Naive thymus-derived CD4-positive, alpha-beta T cell (primary cell): ENCODE measurements at regions of chr4 and their contacts with region 1.

Region 1: DNA sequence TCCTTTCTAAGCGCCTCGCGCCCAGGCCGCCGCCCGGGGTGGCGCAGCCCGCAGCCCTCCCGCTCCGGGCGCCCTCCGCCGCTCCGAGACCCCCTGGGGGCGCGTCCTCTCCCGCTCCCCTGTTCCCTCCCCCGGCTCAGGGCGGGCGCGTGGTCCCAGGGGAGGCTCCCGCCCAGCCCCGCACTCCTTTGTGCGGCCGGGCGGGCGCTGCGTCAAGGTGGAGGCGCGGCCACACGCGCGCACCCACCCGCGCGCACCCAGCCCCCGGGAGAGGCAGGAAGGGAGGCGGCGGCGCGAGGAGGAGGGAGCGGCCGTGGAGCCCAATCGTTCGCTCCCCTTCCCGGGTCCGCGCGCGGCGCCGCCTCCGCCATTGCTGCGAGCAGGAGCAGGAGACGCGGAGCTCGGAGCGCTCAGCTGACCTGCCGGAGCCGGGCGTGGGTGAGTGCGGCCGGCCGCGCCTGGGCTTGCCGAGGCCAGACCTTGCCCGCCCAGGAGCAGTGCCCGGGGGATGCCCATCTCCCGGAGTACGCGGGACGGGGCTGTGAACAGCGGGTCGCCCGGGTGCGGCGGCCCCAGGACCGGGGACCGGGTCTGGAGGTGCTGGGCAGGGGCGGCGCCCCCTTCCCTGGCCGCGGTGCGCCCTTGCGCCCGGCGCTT is at the start of gene NSG1:
- DNase-seq: peak in 6 of 9 donors; percentile 21 to 45 (median 35)
- ATAC-seq: peak; percentile 60
- H3K4me3 ChIP-seq: peak within 1 kb of the TSS; percentile 43
- H3K4me3 Mint-ChIP-seq: peak within 1 kb of the TSS; percentile 75 to 89 (median 86)
- H3K27ac ChIP-seq: no peak within 1 kb of the TSS
- H3K27ac Mint-ChIP-seq: peak within 1 kb of the TSS in 4 of 9 donors; percentile 11 to 21 (median 18)
- H3K4me1 ChIP-seq: peaks cover 0 to 3% of the 10 kb centered on the region in 2 donors
- H3K4me1 Mint-ChIP-seq: peaks cover 4 to 23% (median 16%) of the 10 kb centered on the region in 7 donors
- H3K27me3 ChIP-seq: no peaks in the 10 kb centered on the region
- H3K27me3 Mint-ChIP-seq: peaks cover 30 to 60% (median 46%) of the 10 kb centered on the region in 5 donors
- total RNA-seq, gene NSG1: 0.90 to 24.5 (median 19.5) TPM

Region 2: DNA sequence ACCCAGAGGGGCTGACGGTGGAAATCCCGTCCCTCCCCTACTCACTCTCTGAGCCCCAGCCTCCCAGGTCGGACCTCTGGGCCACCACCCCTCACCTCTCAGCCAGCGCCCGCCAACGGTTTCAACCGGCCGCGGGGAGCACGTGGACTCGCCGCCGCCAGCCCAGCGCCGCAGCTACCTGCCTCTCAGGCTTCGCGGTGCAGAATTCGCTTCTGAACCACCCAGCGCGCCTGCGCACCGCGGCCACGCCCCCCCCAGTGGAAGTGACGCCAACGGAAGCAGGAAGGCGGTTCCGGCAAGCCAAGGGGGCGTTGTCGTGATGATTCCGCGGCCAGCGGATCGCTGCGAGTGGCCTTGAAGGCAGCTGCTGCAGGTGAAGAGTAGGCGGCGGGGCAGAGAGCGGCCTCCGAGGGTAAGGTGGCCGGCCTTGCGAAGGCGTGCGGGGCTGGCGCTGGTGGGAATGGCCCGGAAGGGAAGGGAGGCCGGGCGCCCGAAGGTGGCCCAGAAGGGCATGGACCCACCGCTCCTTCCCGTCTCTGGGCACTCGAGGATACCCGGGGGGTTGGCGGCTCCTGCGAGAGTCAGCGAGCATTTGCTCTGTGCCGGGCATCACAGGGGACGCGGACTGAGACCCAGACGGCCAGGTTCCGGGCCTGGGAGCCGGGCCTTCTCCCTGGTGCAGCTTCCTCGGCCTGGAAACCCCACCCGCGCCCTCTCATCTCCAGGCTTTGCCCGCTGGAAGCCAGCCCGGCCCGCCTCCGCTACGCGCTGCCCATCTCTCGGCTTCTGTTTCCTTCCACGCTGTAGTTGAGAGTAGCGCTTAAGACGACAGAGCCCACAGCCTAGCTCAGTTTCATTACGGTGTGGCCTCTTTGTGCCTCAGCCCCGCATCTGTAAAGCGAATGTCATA is 96.7 kb before region 1 on chr4 and contains the starts of genes LYAR and ZBTB49:
- CTCF ChIA-PET with region 1: no interaction called
- POLR2A ChIA-PET with region 1: no interaction called
- intact Hi-C with region 1: loop called in 1 of 2 experiments (anchors 1 kb)
- DNase-seq: peak; percentile 89 to 99 (median 96)
- ATAC-seq: peak; percentile 96
- H3K4me3 ChIP-seq: peak within 1 kb of the TSS; percentile 81
- H3K4me3 Mint-ChIP-seq: peak within 1 kb of the TSS; percentile 93 to 98 (median 96)
- H3K27ac ChIP-seq: peak within 1 kb of the TSS; percentile 79
- H3K27ac Mint-ChIP-seq: peak within 1 kb of the TSS; percentile 80 to 95 (median 92)
- H3K4me1 ChIP-seq: peaks cover 20 to 21% of the 10 kb centered on the region in 2 donors
- H3K4me1 Mint-ChIP-seq: peaks cover 40 to 77% (median 57%) of the 10 kb centered on the region in 7 donors
- H3K27me3 ChIP-seq: no peaks in the 10 kb centered on the region
- H3K27me3 Mint-ChIP-seq: no peaks in the 10 kb centered on the region
- total RNA-seq, gene LYAR: 11.1 to 27.4 (median 21.0) TPM
- total RNA-seq, gene ZBTB49: 6.3 to 16.1 (median 8.0) TPM

Region 3: GRCh38 chr4:4308800-4309441 is 77.9 kb before region 1 on chr4:
- CTCF ChIA-PET with region 1: no interaction called
- POLR2A ChIA-PET with region 1: no interaction called
- intact Hi-C with region 1: no loop called
- DNase-seq: no peak
- ATAC-seq: no peak
- H3K4me3 ChIP-seq: no peak overlapping the region
- H3K4me3 Mint-ChIP-seq: no peak overlapping the region
- H3K27ac ChIP-seq: no peak overlapping the region
- H3K27ac Mint-ChIP-seq: no peak overlapping the region
- H3K4me1 ChIP-seq: no peaks in the 10 kb centered on the region
- H3K4me1 Mint-ChIP-seq: peaks cover 0 to 7% (median 4%) of the 10 kb centered on the region in 7 donors
- H3K27me3 ChIP-seq: no peaks in the 10 kb centered on the region
- H3K27me3 Mint-ChIP-seq: no peaks in the 10 kb centered on the region

Region 4: DNA sequence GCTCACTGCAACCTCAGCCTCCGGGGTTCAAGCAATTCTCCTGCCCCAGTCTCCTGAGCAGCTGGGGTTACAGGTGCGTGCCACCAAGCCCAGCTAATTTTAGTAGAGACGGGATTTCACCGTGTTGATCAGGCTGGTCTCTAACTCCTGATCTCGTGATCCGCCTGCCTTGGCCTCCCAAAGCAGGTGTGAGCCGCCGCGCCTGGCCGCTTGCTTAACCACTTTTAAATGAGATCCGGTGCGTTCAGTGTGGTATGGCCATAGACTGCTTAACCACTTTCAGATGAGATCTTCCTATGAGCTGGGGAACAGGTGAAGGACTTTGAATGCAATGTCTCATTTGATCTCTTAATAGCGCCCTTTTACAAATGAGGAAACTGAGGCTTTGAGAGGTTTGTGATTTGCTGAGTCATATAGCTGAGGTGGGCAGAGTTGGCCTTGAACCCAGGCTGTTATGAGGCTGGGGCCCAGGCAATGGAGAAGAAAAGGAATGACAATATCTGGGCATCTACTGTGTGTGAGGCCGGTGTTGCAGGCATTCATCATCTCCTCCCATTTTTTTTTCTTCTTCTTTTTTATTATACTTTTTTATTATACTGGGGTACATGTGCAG is 41.8 kb before region 1 on chr4:
- CTCF ChIA-PET with region 1: no interaction called
- POLR2A ChIA-PET with region 1: interaction called, 4 read pairs
- intact Hi-C with region 1: loop called in 1 of 2 experiments (anchors 1 kb)
- DNase-seq: no peak
- ATAC-seq: no peak
- H3K4me3 ChIP-seq: no peak overlapping the region
- H3K4me3 Mint-ChIP-seq: no peak overlapping the region
- H3K27ac ChIP-seq: no peak overlapping the region
- H3K27ac Mint-ChIP-seq: peak overlapping the region in 6 of 9 donors; percentile 8 to 70 (median 14)
- H3K4me1 ChIP-seq: peaks cover 5 to 13% of the 10 kb centered on the region in 2 donors
- H3K4me1 Mint-ChIP-seq: peaks cover 11 to 56% (median 29%) of the 10 kb centered on the region in 7 donors
- H3K27me3 ChIP-seq: no peaks in the 10 kb centered on the region
- H3K27me3 Mint-ChIP-seq: no peaks in the 10 kb centered on the region

Region 5: DNA sequence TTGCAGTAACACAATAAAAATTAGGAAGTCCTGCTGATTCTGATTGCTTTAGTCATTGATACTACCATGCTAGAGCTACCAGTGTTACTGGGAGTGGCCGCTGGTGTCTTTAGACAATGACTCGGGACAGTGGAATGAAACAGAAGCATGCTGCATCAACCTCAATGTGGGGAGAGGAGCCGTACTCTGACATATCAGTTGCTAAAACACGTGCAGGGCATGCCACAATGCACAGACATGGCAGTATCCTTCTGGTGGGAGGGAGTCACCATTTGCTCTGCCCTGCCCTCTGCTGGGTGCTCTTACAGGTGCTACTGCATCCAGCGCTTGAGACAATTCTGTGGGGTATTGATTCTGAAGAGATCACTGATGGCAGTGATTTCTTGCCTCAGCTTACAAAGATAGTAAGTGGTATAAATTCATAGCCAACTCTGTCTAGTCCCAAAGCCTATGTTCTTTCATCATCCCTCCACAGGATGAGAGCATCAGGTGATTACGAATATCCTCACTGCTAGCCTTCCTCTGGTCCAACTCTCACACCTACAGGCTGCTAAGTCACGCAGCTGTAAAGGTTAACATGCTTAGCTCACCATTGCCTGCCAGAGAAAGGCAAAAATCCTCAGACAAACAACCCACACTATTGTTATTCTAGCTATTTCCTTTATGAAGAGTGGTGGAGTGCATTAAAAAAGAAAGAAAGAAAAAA is 43.8 kb after region 1 on chr4:
- CTCF ChIA-PET with region 1: interaction called, 3 read pairs
- POLR2A ChIA-PET with region 1: no interaction called
- intact Hi-C with region 1: loop called (anchors 1 kb)
- DNase-seq: peak in 8 of 9 donors; percentile 11 to 53 (median 35)
- ATAC-seq: peak; percentile 87
- H3K4me3 ChIP-seq: no peak overlapping the region
- H3K4me3 Mint-ChIP-seq: no peak overlapping the region
- H3K27ac ChIP-seq: no peak overlapping the region
- H3K27ac Mint-ChIP-seq: no peak overlapping the region
- H3K4me1 ChIP-seq: no peaks in the 10 kb centered on the region
- H3K4me1 Mint-ChIP-seq: peaks cover 0 to 6% (median 3%) of the 10 kb centered on the region in 7 donors
- H3K27me3 ChIP-seq: no peaks in the 10 kb centered on the region
- H3K27me3 Mint-ChIP-seq: no peaks in the 10 kb centered on the region

Region 6: DNA sequence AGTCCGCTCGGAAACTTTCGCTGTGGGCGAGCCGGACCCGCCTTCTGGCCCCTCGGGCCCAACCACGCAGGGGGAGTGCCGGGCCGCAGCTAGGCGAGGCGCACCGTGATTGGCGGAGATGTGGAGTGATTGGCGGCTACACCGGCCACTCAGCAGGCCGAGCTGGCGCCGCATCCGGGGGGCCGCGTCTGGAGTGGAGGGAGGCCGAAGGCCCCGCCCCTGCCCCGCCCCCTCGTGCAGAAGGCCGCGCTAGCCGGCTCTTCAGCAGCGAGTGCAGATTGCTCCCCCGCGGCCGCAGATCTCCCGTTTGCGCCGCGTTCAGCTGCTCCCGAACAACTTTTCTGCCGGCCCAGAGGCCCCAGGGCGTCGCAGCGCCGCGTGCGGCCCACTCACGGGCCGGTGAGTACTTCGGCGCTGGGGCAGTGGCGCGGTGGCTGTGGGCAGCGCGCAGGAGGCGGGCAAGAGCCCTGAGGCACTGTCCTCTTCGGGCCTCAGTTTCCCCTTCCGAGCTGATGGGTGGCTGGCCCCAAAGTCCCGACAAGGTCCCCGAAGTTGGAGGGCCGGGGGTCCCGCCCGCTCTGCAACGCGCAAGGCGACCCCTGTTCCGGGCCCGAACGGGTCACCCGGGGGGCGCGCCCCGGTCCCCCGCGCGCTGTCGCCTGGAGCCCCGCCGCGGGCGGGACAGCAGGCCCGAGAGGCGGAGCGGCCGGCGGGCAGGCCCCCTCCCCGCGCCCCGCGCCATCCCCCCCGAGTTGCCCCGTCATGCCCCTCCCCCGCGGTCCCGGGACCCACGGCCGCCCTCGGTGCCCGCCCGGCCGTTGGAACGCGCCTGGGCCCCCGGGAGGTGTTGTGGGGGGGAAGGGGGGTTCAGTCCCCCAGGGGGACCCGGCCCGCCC is 1883.0 kb after region 1 on chr4 and contains the start of gene WFS1:
- CTCF ChIA-PET with region 1: no interaction called
- POLR2A ChIA-PET with region 1: no interaction called
- intact Hi-C with region 1: loop called in 1 of 2 experiments (anchors 5 kb)
- DNase-seq: peak; percentile 91 to 97 (median 95)
- ATAC-seq: peak; percentile 100
- H3K4me3 ChIP-seq: peak within 1 kb of the TSS; percentile 82
- H3K4me3 Mint-ChIP-seq: peak within 1 kb of the TSS; percentile 85 to 92 (median 90)
- H3K27ac ChIP-seq: peak within 1 kb of the TSS; percentile 67
- H3K27ac Mint-ChIP-seq: peak within 1 kb of the TSS; percentile 24 to 84 (median 65)
- H3K4me1 ChIP-seq: peaks cover 8% of the 10 kb centered on the region in 2 donors
- H3K4me1 Mint-ChIP-seq: peaks cover 19 to 31% (median 25%) of the 10 kb centered on the region in 7 donors
- H3K27me3 ChIP-seq: no peaks in the 10 kb centered on the region
- H3K27me3 Mint-ChIP-seq: peaks cover 0 to 44% (median 3%) of the 10 kb centered on the region in 5 donors
- total RNA-seq, gene WFS1: 2.8 to 6.7 (median 4.4) TPM